OCI-LY7 (cell line): ENCODE measurements at regions of chr6 and their contacts with region 1.

Region 1: DNA sequence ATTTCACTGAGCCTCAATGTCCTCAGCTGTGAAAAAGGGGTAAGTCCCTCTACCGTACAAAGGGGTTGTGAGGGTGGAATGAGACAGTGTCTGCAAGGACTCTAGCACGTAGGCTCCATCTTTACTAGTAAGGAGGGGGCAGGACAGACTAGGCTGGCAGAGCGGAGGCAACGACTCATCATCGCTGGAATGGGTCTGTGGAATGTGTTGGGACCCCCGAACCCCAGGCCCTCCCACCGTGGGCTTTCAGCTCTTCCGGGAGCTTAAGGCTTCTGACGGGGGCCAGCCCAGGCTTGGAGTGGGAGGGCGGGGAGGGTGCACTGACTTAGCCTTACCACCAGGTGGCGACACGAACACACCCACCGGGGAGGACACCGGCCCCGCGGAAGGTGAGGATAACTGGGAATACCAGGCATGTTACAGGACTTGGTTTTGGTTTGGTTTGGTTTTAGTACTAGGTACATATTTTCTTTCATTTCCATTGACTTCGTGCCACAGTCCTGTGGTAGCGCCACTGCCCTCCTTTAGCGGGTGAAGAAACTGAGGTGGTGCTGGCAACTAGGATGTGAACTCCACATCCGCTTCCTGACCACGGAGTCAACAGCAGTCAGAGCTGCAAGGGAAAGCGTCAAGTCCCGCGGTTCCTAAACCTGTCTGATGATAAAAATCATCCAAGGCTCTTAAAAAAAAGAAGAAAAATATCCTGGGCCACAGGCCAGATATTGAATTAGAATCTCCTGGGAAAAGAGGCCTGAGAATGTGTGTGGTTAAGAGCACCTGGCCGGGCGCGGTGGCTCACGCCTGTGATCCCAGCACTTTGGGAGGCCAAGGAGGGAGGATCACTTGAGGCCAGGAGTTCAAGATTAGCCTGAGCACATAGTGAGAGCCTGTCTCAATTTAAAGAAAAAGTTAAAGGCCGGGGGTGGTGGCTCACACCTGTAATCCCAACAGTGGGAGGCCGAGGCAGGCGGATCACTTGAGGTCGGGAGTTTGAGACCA is 10.3 kb upstream of the TULP1 start:
- DNase-seq: peak; percentile 72
- H3K4me3 ChIP-seq: peak overlapping the region; percentile 6
- H3K27ac ChIP-seq: no peak overlapping the region
- H3K4me1 ChIP-seq: no peaks in the 10 kb centered on the region
- CTCF ChIP-seq: peak; percentile 97

Region 2: GRCh38 chr6:35497571-35498442 is 25.2 kb before region 1 on chr6:
- CTCF ChIA-PET with region 1: interaction called, 12 read pairs
- POLR2A ChIA-PET with region 1: no interaction called
- intact Hi-C with region 1: no loop called
- DNase-seq: peak; percentile 37
- H3K4me3 ChIP-seq: peak overlapping the region; percentile 71
- H3K27ac ChIP-seq: no peak overlapping the region
- H3K4me1 ChIP-seq: peaks cover 14% of the 10 kb centered on the region
- CTCF ChIP-seq: no peak

Region 3: GRCh38 chr6:35566794-35567193 is 43.8 kb after region 1 on chr6:
- CTCF ChIA-PET with region 1: no interaction called
- POLR2A ChIA-PET with region 1: no interaction called
- intact Hi-C with region 1: no loop called
- DNase-seq: no peak
- H3K4me3 ChIP-seq: no peak overlapping the region
- H3K27ac ChIP-seq: no peak overlapping the region
- H3K4me1 ChIP-seq: no peaks in the 10 kb centered on the region
- CTCF ChIP-seq: no peak

Region 4: DNA sequence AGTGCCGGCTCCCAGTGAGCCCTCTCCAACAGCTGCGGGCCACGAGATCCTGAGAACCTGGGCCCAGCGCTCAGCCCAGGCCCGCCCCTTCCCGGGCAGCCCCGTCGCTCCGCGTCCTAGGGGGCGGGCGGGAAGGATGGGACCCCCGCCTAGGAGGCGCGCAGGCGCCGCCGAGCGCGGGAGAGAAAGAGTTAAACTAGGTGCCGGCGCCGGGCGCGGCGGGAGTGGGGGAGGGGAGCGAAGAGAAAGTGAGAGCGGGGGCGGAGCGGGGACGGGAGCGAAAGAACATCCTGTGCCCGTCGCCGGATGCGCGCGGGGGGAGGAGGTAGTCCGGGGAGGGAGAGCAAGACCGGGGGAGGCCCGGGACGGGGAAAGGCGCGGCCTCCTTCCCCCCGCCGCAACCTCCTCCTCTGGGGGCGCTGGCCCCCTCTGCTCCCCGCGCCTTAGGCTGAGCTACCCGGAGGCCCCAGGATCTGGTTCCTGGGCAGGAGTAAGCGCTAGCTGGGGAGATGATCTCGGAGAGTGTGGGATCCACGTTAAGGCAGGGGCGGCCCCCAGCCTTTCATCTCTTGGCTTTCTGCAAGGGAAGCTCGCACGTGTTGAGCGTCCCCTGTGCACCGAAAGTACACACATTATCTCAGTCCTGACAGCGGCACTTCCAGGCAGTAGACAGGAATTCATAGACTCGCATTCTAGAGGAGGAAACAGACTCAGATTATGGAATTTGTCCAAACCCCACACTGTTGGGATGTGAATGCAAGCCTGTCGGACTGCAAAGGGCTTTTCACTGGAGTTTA is 209.0 kb after region 1 on chr6:
- CTCF ChIA-PET with region 1: interaction called, 12 read pairs
- POLR2A ChIA-PET with region 1: interaction called, 3 read pairs
- intact Hi-C with region 1: loop called (anchors 1 kb)
- DNase-seq: peak; percentile 94
- H3K4me3 ChIP-seq: peak overlapping the region; percentile 76
- H3K27ac ChIP-seq: peak overlapping the region; percentile 96
- H3K4me1 ChIP-seq: peaks cover 71% of the 10 kb centered on the region
- CTCF ChIP-seq: peak; percentile 48; the same call in 1 of the 2 replicates

Region 5: DNA sequence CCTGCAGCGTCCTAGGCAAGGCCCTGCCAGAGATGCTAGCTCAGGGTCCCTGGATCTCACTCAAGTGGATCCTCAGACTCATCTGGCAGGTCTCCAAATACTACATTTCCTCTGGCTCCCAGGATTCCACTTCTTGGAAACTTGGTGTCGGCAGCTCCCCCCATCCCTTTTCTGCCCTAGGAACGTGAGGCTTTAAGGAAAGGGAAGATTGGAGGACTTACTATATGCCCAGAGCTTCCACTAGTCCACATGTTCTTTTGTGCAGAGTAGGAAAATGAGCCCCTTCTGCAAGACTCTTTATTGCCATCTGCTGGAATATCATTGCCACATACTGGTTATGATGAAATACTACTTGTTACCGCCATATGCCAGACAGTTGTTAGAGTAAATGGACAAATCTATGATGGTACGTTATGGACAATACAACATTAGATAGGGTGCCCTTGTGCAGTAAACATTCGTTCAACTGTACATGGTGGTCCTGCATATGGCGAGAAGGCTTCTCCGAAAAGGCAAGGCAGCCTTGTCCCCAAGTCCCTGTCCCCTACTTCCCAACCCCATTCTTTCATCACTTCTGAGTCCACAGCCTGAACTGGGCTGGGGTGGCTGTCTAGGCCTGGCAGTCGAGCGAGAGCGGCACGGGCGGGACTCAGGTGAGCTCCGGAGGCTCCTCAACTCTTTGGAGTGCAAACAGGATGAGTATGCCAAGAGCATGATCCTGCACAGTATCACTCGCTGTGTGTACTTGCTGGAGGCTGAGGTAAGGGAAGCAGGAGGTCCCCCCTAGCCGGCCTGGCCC is 214.7 kb after region 1 on chr6:
- CTCF ChIA-PET with region 1: interaction called, 12 read pairs
- POLR2A ChIA-PET with region 1: interaction called, 3 read pairs
- intact Hi-C with region 1: loop called (anchors 1 kb)
- DNase-seq: peak; percentile 91
- H3K4me3 ChIP-seq: peak overlapping the region; percentile 49
- H3K27ac ChIP-seq: peak overlapping the region; percentile 12
- H3K4me1 ChIP-seq: peaks cover 36% of the 10 kb centered on the region
- CTCF ChIP-seq: peak; percentile 96

Region 6: GRCh38 chr6:35757456-35758123 is 234.6 kb after region 1 on chr6:
- CTCF ChIA-PET with region 1: no interaction called
- POLR2A ChIA-PET with region 1: interaction called, 3 read pairs
- intact Hi-C with region 1: loop called (anchors 5 kb)
- DNase-seq: peak; percentile 66
- H3K4me3 ChIP-seq: no peak overlapping the region
- H3K27ac ChIP-seq: no peak overlapping the region
- H3K4me1 ChIP-seq: peaks cover 25% of the 10 kb centered on the region
- CTCF ChIP-seq: peak; percentile 76

Region 7: DNA sequence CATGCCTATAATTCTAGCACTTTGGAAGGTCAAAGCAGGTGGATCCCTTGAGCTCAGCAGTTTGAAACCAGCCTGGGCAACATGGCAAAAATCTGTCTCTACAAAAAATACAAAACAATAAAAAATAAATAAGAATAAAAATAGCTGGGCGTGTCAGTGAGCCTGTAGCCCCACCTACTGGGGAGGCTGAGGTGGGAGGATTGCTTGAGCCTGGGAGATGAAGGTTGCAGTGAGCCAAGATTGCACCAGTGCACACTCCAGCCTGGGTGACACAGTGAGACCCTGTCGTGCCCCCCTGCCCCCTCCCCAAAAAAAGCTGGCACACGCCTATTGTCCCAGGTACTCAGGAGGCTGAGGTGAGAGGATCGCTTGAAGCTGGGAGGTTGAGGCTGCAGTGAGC is 433.0 kb after region 1 on chr6:
- CTCF ChIA-PET with region 1: no interaction called
- POLR2A ChIA-PET with region 1: no interaction called
- intact Hi-C with region 1: loop called (anchors 5 kb)
- DNase-seq: peak; percentile 10
- H3K4me3 ChIP-seq: no peak overlapping the region
- H3K27ac ChIP-seq: no peak overlapping the region
- H3K4me1 ChIP-seq: no peaks in the 10 kb centered on the region
- CTCF ChIP-seq: peak; percentile 77